CD8-positive, alpha-beta T cell (primary cell): ENCODE measurements at regions of chrX and their contacts with region 1.

Region 1: DNA sequence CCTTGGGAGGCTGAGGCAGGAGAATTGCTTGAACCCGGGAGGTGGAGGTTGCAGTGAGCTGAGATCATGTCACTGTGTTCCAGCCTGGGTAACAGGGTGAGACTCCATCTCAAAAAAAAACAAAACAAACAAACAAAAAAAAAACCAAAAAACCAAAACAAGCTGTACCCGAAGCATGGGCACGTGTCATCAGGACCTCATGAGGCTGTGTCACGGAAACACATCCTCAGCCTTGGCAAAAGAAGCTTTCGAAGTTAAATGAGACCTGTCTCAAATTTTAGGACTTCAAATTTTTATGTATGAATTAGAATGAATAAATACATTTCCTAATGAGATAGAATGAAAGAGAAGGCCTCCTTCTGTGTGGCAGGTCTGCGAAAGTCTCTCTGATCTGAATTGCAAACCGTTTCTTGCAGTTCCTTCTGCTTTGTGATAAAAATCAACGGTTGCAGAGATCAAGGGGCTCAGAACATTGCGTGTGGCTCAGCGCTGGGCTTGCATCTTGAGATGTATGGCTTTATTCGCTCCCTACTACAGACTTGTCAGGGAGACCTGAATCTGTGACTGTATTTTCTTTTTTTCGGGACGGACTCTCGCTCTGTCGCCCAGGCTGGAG is 19.5 kb upstream of the CRLF2 start:
- DNase-seq: peak in 4 of 9 experiments; percentile 28 to 55 (median 34)
- ATAC-seq: peak; percentile 67
- H3K4me3 ChIP-seq: peak overlapping the region in 1 of 2 experiments; percentile 19
- H3K4me3 Mint-ChIP-seq: peak overlapping the region; percentile 66
- H3K27ac ChIP-seq: no peak overlapping the region
- H3K27ac Mint-ChIP-seq: peak overlapping the region; percentile 45
- H3K4me1 ChIP-seq: peaks cover 7% of the 10 kb centered on the region
- H3K4me1 Mint-ChIP-seq: peaks cover 19% of the 10 kb centered on the region
- H3K27me3 ChIP-seq: no peaks in the 10 kb centered on the region
- H3K27me3 Mint-ChIP-seq: no peaks in the 10 kb centered on the region
- CTCF ChIP-seq: no peak

Region 2: GRCh38 chrX:1205680-1206611 is 26.0 kb before region 1 on chrX:
- CTCF ChIA-PET with region 1: no interaction called
- POLR2A ChIA-PET with region 1: no interaction called
- intact Hi-C with region 1: loop called in 1 of 2 experiments (anchors 1 kb)
- DNase-seq: peak in 6 of 9 experiments; percentile 6 to 76 (median 40)
- ATAC-seq: peak; percentile 45
- H3K4me3 ChIP-seq: peak overlapping the region; percentile 43 to 52
- H3K4me3 Mint-ChIP-seq: peak overlapping the region; percentile 77
- H3K27ac ChIP-seq: no peak overlapping the region
- H3K27ac Mint-ChIP-seq: no peak overlapping the region
- H3K4me1 ChIP-seq: peaks cover 20% of the 10 kb centered on the region
- H3K4me1 Mint-ChIP-seq: peaks cover 27% of the 10 kb centered on the region
- H3K27me3 ChIP-seq: peaks cover 0 to 2% of the 10 kb centered on the region in 2 experiments
- H3K27me3 Mint-ChIP-seq: no peaks in the 10 kb centered on the region
- CTCF ChIP-seq: no peak